HEK293 (cell line): ENCODE measurements at regions of chr2 and their contacts with region 1.

Region 1: DNA sequence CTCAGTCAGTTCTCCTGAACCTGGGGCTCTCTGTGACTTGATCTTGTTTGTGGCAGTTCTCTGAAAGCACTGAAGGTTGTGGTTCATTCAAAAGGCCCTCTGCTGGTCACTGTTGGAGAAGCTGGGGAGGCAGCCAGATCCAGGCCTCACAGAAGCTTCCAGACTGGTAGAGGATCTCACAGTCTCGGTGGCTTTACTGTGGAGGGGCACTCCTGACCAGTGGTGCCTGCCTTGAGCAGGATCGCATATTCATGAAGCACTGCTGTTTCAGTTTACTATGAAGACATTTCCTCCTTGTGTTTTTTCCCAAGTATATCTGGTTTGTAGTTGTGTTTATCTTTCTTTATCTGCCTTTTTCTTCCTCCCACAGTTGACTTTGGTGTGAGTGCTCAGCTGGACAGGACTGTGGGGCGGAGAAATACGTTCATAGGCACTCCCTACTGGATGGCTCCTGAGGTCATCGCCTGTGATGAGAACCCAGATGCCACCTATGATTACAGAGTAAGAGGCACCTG is 133.9 kb downstream of the MAP4K4 start:
- H3K4me3 ChIP-seq: no peak overlapping the region
- H3K27ac ChIP-seq: no peak overlapping the region
- H3K4me1 ChIP-seq: no peaks in the 10 kb centered on the region
- CTCF ChIP-seq: 0 out of 2 replicates have a peak, but pooled peaks have one; percentile 18

Region 2: GRCh38 chr2:101419096-101419663 is 412.2 kb before region 1 on chr2:
- CTCF ChIA-PET with region 1: interaction called, 10 read pairs
- POLR2A ChIA-PET with region 1: no interaction called
- H3K4me3 ChIP-seq: no peak overlapping the region
- H3K27ac ChIP-seq: no peak overlapping the region
- H3K4me1 ChIP-seq: no peaks in the 10 kb centered on the region
- CTCF ChIP-seq: 0 out of 2 replicates have a peak, but pooled peaks have one; percentile 13

Region 3: DNA sequence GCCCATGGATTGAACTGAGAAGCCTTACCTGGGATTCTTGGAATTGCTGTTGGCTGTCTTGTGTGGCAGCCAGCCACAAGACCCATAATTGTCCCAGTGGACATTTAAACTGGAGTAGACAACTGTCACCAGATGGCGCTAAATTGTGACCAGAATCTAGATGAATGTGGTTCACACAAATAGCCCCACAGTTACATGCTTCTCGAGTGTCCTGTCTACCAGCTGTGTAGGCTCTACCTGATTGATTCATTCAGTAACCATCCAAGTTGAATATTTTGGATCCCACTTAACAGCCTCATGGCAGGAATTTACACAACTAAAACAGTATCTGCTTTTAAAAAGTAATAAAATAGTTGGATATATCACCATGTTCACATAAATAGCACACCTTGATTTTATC is 60.7 kb before region 1 on chr2:
- CTCF ChIA-PET with region 1: interaction called, 21 read pairs
- POLR2A ChIA-PET with region 1: no interaction called
- H3K4me3 ChIP-seq: no peak overlapping the region
- H3K27ac ChIP-seq: no peak overlapping the region
- H3K4me1 ChIP-seq: peaks cover 22% of the 10 kb centered on the region
- CTCF ChIP-seq: peak; percentile 16; the same call in 1 of the 2 replicates

Region 4: GRCh38 chr2:101793277-101793969 is 38.0 kb before region 1 on chr2:
- CTCF ChIA-PET with region 1: no interaction called
- POLR2A ChIA-PET with region 1: no interaction called
- H3K4me3 ChIP-seq: no peak overlapping the region
- H3K27ac ChIP-seq: no peak overlapping the region
- H3K4me1 ChIP-seq: peaks cover 3% of the 10 kb centered on the region; the same call in 1 of the 2 replicates
- CTCF ChIP-seq: no peak